ENCODE measurements at regions of chr19 and their contacts with region 1.

Region 1: GRCh38 chr19:4851551-4852290 is 15.7 kb downstream of the PLIN3 start:
- DNase-seq: peak; percentile 60 to 94
- H3K4me3 ChIP-seq: no peak overlapping the region
- H3K27ac ChIP-seq: no peak overlapping the region
- H3K4me1 ChIP-seq: no peaks in the 10 kb centered on the region
- H3K27me3 ChIP-seq: no peaks in the 10 kb centered on the region
- CTCF ChIP-seq: peak; percentile 88 to 96 (median 94)
- EP300 ChIP-seq: no peak
- POLR2A ChIP-seq: no peak
- RAD21 ChIP-seq: peak; percentile 71 to 78

Region 2: DNA sequence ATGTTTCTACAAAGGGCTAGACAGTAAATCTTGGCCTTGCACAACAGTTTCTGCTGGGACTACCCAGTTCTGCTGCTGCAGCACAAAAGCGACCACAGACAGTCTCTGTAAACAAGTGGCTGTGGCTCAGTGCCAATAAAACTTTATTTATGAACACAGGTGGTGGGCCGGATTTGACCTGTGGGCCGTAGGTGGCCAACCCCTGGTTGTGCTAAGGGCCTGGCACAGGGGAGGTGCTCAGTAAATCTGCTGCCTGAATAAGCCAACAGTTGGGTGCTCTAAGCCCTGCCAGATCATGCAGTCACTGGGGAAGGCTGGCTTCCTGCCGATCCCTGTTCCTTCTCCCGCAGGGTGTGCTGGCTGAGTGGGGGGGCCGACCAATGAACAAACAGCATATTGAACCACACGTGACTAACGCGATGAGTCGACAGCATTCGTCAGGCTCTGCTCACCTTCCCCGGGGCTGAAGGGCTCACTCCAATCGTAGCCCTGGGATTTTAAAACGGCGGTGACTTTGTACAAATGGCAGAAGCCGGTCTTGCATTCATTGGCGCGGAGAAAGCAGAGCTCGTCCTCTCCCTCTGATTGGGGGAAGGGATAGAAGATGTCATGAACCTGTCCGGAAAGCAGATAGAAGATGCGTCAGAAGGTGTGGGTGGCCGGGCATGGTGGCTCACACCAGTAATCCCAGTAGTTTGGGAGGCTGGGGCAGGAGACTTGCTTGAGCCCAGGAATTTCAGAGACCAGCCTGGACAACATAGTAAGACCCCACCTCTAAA is 157.3 kb before region 1 on chr19:
- CTCF ChIA-PET with region 1: no interaction called
- POLR2A ChIA-PET with region 1: no interaction called
- DNase-seq: no peak
- H3K4me3 ChIP-seq: no peak overlapping the region
- H3K27ac ChIP-seq: no peak overlapping the region
- H3K4me1 ChIP-seq: no peaks in the 10 kb centered on the region
- H3K27me3 ChIP-seq: no peaks in the 10 kb centered on the region
- CTCF ChIP-seq: no peak
- EP300 ChIP-seq: no peak
- POLR2A ChIP-seq: no peak
- RAD21 ChIP-seq: no peak

Region 3: GRCh38 chr19:4867534-4868285 is 16.0 kb after region 1 on chr19 and contains the start of gene PLIN3:
- CTCF ChIA-PET with region 1: interaction called, 44 read pairs
- POLR2A ChIA-PET with region 1: interaction called, 4 read pairs
- DNase-seq: peak; percentile 81 to 99
- H3K4me3 ChIP-seq: peak within 1 kb of the TSS; percentile 77 to 98 (median 84)
- H3K27ac ChIP-seq: peak within 1 kb of the TSS; percentile 46
- H3K4me1 ChIP-seq: peaks cover 0 to 5% (median 2%) of the 10 kb centered on the region in 4 experiments; a peak in 3 of 7 replicates
- H3K27me3 ChIP-seq: no peaks in the 10 kb centered on the region
- CTCF ChIP-seq: no peak
- EP300 ChIP-seq: no peak
- POLR2A ChIP-seq: no peak
- RAD21 ChIP-seq: no peak
- total RNA-seq, gene PLIN3: 60.7 and 68.1 TPM in 2 replicates